ENCODE measurements at regions of chr6 and their contacts with region 1.

Region 1: DNA sequence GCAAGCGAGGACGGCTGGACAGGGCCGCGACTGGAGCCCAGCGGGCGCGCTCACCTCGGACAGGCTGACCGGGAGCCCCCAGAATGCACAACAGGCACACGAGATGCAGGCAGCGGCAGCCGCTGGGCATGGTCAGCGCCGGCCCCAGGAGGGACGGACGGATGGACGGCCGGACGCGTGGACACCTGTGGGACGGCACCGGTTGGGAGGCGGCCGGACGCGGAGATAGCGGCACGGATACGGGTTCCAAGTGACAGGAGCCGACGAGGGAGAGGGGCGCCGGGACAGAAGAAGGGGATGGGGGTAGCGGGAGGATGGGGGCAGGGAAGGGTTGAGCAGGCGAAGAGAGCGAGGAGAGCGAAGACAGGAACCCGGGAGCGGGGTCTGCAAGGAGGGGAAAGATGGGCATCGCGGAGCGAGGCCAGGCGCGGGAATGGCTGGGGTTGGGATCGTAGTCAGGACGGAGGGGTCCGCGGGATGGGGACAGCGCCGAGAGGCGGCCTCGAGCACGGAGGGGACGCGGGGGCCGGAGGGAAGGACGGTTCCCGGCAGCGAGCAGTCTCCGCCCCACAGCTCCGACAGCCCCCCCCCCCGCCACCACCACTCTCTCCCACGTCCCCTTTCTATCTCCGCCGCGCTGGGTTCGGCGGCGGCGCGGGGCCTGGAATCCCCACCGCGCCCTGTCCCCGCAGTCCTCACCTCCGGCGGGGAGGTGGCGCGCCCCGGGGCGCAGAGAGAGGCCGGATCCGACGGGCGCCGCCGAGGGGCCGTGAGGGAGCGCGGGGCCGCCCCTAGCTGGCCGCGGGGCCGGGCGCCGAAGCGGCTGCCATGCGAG is 435 bp downstream of the DLK2 start:
- DNase-seq: peak in 1 of 2 experiments; percentile 86
- H3K4me3 ChIP-seq: peak overlapping the region; percentile 72
- H3K27ac ChIP-seq: no peak overlapping the region
- H3K4me1 ChIP-seq: 0 out of 2 replicates have a peak, but pooled peaks cover 14% of the 10 kb centered on the region
- H3K27me3 ChIP-seq: no peaks in the 10 kb centered on the region
- CTCF ChIP-seq: peak; percentile 38; the same call in 1 of the 2 replicates

Region 2: DNA sequence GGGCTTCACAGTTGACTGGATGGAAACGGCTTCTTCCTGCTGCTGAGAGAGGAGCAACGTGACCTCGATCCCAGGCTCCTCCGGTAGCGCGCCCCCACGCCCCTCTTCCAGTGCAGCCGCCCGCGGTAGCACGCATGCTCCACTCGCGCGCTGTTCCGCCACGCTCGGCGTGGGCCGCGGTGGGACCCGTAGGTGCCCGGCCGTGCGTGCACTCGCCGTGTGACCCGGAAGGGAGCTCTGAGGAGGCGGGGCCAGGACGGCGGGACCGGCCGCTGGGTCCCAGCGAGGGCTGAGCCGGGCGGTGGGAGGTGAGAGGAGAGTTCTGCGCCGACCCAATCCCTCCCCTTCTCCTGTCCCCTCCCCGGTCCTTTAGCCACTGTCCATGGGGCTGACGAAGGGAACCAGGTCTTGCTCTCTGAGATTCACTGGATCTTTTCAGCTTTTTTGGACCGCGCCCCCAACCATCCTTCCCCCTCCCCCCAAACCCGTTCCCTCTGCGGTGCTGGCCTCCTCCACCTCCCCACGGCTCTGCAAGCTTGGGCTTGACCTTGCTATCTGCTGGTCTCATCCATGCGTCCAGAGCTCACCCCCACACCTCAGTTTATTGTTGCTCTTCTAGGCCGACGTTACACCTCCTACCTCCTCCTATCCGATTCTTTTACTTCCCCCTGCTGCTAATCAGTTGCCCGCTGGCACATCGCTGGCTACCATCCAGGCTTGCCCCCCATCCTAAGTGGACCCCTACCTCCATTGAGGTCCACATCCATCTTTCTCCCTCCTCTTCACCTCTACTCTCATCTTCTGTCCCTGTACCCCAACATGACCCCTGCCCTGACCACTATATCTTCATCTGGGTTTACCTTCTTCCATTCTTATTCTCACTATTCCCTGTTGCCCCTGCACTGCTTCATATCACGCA is 272.7 kb before region 1 on chr6 and contains the start of gene CUL9:
- CTCF ChIA-PET with region 1: no interaction called
- POLR2A ChIA-PET with region 1: interaction called, 19 read pairs
- intact Hi-C with region 1: no loop called
- DNase-seq: peak; percentile 43 to 77
- H3K4me3 ChIP-seq: peak within 1 kb of the TSS; percentile 72
- H3K27ac ChIP-seq: peak within 1 kb of the TSS; percentile 52
- H3K4me1 ChIP-seq: peaks cover 18% of the 10 kb centered on the region
- H3K27me3 ChIP-seq: no peaks in the 10 kb centered on the region
- CTCF ChIP-seq: no peak
- total RNA-seq, gene CUL9: 52.8 and 71.6 TPM in 2 replicates

Region 3: GRCh38 chr6:43263314-43264178 is 191.4 kb before region 1 on chr6:
- CTCF ChIA-PET with region 1: no interaction called
- POLR2A ChIA-PET with region 1: no interaction called
- intact Hi-C with region 1: loop called (anchors 1 kb)
- DNase-seq: peak in 1 of 2 experiments; percentile 74
- H3K4me3 ChIP-seq: no peak overlapping the region
- H3K27ac ChIP-seq: no peak overlapping the region
- H3K4me1 ChIP-seq: no peaks in the 10 kb centered on the region
- H3K27me3 ChIP-seq: no peaks in the 10 kb centered on the region
- CTCF ChIP-seq: peak; percentile 83

Region 4: DNA sequence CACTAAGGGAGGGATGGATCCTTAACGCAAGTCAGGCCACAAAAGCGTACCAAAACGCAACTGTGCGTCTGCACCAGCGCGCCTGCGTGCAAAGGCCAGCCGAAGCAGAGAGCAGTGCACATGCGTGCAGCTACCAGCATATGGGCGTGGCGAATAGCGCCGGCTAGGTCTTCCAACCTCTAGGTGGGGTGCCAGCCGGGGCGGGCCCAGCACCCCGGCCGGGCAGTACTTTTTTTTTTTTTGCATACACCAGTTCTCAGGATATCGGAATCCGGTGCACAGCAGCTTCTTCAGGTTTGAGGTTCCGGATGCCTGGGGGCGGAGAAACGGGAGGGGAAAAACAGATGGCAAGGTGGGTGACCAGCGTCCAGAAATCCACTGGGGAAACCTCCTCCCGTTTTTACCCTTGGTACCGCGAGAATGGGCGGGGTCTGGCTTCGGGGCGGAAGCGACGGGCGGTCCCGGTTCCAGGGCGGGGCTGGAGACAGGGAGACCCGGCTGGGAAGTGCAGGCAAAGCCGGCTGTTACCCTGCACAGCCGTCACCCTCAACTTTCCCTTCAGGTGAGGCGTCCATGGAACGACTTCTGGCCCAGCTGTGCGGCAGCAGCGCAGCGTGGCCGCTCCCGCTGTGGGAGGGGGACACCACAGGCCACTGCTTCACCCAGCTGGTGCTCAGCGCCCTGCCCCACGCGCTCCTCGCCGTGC is 27.4 kb before region 1 on chr6 and contains the start of gene ABCC10:
- CTCF ChIA-PET with region 1: interaction called, 4 read pairs
- POLR2A ChIA-PET with region 1: no interaction called
- intact Hi-C with region 1: loop called (anchors 2 kb)
- DNase-seq: peak; percentile 91 to 96
- H3K4me3 ChIP-seq: peak within 1 kb of the TSS; percentile 87
- H3K27ac ChIP-seq: peak within 1 kb of the TSS; percentile 64
- H3K4me1 ChIP-seq: peaks cover 19% of the 10 kb centered on the region
- H3K27me3 ChIP-seq: no peaks in the 10 kb centered on the region
- CTCF ChIP-seq: peak; percentile 47; the same call in 1 of the 2 replicates
- total RNA-seq, gene ABCC10: 28.4 and 28.7 TPM in 2 replicates

Region 5: GRCh38 chr6:43506667-43507471 is 52.0 kb after region 1 on chr6:
- CTCF ChIA-PET with region 1: no interaction called
- POLR2A ChIA-PET with region 1: no interaction called
- intact Hi-C with region 1: loop called (anchors 2 kb)
- DNase-seq: peak; percentile 62 to 77
- H3K4me3 ChIP-seq: no peak overlapping the region
- H3K27ac ChIP-seq: no peak overlapping the region
- H3K4me1 ChIP-seq: 0 out of 2 replicates have a peak, but pooled peaks cover 7% of the 10 kb centered on the region
- H3K27me3 ChIP-seq: no peaks in the 10 kb centered on the region
- CTCF ChIP-seq: peak; percentile 94